Colonic mucosa (tissue), 4 donors: ENCODE measurements at regions of chr14 and their contacts with region 1.

Region 1: DNA sequence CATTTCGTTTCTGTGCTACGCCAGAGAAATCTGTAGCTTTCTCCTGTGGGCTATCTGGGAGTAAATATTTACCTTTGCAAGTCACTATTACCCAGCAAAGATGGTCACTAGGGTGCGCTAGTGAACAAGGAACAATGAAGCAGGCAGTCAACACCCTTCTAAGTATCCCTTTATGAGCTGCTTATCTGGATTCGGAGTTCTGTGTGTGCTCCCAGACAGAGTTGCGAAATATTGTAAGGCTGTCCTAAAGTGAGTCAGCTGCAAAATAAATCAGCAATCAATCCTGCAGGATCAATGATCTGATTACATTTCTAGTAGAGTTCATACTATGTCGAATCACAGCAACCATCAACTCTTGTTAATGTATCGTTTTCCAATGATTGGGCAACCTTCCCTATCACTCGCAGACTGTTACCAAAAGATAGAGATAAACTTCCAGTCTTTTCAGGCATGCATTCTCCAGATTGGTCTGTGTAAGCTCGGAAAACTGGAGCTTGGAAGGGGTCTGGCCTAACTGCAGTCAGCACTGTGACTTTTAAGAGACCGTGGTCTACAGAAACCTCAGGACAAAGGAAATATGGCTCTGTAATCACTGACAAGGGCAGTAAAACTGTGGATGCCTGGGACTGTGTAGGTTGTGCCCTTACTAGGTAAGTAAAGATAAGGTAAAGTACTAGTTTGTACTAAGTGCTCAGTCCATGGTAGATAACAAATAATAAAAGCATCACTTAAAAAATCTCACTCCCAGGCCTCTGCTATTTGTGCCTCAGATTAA is 133.5 kb downstream of the KCNK10 start:
- DNase-seq: peak; percentile 94
- H3K4me3 ChIP-seq: no peak overlapping the region
- H3K27ac ChIP-seq: no peak overlapping the region
- H3K4me1 ChIP-seq: no peaks in the 10 kb centered on the region
- H3K27me3 ChIP-seq: no peaks in the 10 kb centered on the region
- CTCF ChIP-seq: peak; percentile 58

Region 2: DNA sequence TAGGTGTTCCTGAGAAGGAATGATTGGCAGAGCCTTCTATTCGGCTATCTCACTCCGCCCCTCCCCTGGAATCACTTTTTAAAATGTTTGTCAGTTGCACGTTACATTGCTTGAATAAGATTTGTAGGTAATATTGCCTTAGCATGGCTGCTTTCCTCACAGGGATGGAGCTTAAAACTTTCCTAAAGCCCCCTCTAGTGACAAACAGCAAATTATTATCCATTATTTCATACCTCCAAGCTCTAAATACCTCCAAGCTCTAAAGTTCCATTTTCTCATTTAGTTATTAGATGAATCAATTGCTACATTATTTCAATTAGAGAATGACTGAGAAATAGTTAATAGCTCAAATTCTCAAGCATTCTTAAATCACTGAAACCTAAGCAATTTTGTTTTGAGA is 190.8 kb after region 1 on chr14:
- intact Hi-C with region 1: loop called (anchors 5 kb)
- DNase-seq: no peak
- H3K4me3 ChIP-seq: no peak overlapping the region
- H3K27ac ChIP-seq: no peak overlapping the region
- H3K4me1 ChIP-seq: no peaks in the 10 kb centered on the region
- H3K27me3 ChIP-seq: no peaks in the 10 kb centered on the region
- CTCF ChIP-seq: no peak